ENCODE measurements at regions of chr14 and their contacts with region 1.

Region 1: DNA sequence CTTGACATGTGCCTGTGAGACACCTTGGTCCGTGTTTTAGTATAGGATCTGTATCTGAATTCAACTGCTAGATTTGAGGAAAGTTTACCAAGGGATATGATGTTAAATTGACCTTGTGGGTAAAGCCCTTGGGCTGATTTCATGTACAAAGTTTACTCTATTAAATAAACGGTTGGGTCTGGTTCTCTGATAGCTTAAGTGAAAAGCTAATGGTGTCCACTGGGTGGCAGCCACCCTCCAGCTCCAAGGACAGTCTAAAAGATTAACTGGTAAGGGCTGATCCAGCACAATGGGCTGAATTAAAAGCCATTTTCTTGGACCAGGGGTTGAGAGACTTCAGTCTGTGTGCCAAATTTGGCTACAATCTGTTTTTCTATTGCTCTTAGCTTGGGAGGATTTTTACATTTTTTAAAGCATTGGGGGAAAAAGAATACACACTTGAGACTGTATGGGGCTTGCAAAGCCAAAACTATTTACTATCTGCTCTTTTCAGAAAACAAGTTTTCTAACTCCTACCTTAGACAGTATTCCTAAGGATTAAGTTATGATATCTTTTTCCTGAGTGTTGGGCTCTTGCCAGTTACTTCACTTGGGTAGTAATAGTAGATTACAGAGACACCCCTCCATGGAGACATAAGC is 116.5 kb downstream of the GPHN start:
- DNase-seq: no peak
- ATAC-seq: peak; percentile 92

Region 2: DNA sequence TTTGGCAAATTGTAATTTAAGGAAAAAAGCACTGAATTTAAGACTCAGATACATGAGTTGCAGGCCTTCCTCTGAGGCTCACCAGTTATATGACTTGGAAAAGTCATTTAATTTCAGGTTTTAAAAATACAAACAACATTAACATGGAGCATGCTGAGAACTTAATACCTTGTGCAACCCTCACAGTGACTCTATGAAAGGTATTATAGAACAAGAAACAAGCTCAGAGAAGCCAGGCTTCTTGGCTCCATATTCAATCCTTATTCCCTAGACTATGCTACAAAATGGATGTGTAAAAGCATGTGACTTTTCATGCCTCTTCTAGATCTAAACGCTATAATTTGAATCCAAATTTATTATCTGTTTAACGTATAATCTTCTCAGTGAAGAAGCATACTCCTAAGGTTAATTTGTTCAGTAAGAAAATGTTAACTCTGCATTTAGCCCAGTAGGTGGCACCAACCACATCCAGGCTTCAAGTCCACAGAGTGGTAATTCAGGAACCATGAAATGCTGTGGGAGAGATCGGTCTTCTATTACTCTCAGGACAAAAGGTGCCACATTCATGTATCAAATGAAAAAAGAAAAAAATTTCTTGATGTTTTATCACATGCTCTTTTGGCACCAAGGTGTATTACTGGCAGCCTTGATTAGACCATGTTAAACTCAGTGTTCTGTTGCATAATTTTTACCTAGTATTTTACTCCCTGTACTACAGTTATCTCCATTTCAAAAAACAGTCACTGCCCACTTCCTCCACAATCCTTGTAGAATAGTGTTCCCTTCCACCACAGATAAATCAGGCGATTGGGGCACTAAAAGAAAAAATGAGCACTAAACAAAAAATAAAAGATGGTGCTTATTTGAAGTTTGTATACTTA is 129.0 kb before region 1 on chr14:
- intact Hi-C with region 1: loop called (anchors 5 kb)
- DNase-seq: no peak
- ATAC-seq: peak; percentile 84

Region 3: DNA sequence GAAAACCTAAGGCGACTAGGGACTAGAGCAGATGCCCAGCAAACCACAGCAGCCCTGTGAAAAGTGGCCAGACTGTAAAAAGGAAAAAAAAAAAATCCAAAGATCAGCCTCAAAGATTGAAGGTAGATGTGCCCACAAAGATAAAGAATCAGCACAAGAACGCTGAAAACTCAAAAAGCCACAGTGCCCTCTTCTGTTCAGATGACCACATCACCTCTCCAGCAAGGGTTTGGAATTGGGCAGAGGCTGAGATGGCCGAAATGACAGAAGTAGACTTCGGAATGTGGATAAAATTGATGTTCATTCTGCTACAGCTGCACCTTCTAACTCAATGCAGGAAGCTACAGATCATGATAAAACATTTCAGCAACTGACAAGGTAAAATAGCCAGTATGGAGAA is 38.0 kb after region 1 on chr14:
- intact Hi-C with region 1: loop called (anchors 2 kb)
- DNase-seq: no peak
- ATAC-seq: no peak

Region 4: DNA sequence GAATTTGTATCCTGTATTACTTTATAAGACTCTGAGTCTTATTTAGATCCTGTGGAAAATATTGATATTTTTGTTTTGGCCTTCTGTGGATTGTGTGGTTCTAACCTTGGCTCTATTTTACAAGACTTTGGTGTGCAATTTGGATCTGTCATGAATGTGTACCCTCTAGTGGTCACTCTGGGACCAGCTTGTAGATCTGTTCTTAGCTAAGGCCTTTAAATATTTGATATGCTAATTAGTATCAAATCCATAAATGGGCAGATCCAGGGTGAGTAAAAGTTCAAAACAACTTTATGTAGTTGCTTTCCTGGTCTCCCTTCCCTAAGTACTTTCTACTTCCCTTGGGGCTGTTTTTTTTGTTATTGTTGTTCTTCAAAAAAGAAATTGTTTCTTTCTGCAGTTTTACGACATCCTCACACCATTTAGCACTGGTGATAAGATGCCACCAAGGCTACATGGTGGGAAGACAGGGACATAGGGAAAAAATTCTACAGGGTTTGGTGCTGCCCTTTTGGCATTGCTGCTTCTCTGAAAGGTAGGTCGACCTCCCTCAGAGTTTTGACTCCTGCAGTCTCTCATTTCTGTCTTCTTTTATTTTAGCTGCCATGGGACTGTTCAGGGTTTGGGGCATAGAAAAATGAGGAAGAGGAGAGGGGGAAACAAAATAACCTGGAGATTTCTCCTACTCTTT is 122.0 kb after region 1 on chr14:
- intact Hi-C with region 1: loop called (anchors 10 kb)
- DNase-seq: no peak
- ATAC-seq: no peak

Measured in Right ventricle myocardium inferior (tissue), 1 donor.